PC-3 (cell line): ENCODE measurements at regions of chr4 and their contacts with region 1.

Region 1: DNA sequence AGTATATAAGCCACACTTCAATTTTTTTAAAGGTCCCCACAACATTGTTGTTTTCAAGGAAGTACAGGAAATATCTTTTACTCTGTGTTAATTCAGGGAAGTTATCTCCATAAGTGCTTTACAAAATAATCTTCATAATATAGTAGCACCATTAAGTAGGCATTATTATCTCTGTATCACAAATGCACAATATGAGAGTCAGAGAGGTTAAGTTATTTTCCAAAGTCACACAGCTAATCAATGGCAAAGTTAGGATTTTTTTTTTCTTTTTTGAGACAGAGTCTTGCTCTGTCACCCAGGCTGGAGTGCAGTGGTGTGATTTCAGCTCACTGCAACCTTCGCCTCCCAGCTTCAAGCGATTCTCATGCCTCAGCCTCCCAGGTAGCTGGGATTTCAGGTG is 35.1 kb upstream of the PI4K2B start:
- DNase-seq: no peak
- ATAC-seq: no peak
- H3K4me3 ChIP-seq: no peak overlapping the region
- H3K27ac ChIP-seq: no peak overlapping the region
- H3K4me1 ChIP-seq: no peaks in the 10 kb centered on the region
- H3K27me3 ChIP-seq: no peaks in the 10 kb centered on the region
- CTCF ChIP-seq: no peak

Region 2: GRCh38 chr4:24794916-24795665 is 403.6 kb before region 1 on chr4 and contains the start of gene SOD3:
- CTCF ChIA-PET with region 1: no interaction called
- POLR2A ChIA-PET with region 1: no interaction called
- intact Hi-C with region 1: no loop called
- DNase-seq: peak; percentile 86
- ATAC-seq: peak; percentile 96
- H3K4me3 ChIP-seq: peak within 1 kb of the TSS; percentile 63
- H3K27ac ChIP-seq: peak within 1 kb of the TSS; percentile 63
- H3K4me1 ChIP-seq: peaks cover 24% of the 10 kb centered on the region
- H3K27me3 ChIP-seq: no peaks in the 10 kb centered on the region
- CTCF ChIP-seq: no peak
- total RNA-seq, gene SOD3: 10.7 and 16.4 TPM in 2 replicates

Region 3: GRCh38 chr4:25020236-25020635 is 178.5 kb before region 1 on chr4:
- CTCF ChIA-PET with region 1: no interaction called
- POLR2A ChIA-PET with region 1: no interaction called
- intact Hi-C with region 1: no loop called
- DNase-seq: peak; percentile 38
- ATAC-seq: 0 out of 2 replicates have a peak, but pooled peaks have one; percentile 37
- H3K4me3 ChIP-seq: no peak overlapping the region
- H3K27ac ChIP-seq: no peak overlapping the region
- H3K4me1 ChIP-seq: no peaks in the 10 kb centered on the region
- H3K27me3 ChIP-seq: no peaks in the 10 kb centered on the region
- CTCF ChIP-seq: no peak

Region 4: GRCh38 chr4:25271866-25272265 is 73.2 kb after region 1 on chr4:
- CTCF ChIA-PET with region 1: interaction called, 12 read pairs
- POLR2A ChIA-PET with region 1: interaction called, 5 read pairs
- intact Hi-C with region 1: no loop called
- DNase-seq: no peak
- ATAC-seq: no peak
- H3K4me3 ChIP-seq: no peak overlapping the region
- H3K27ac ChIP-seq: no peak overlapping the region
- H3K4me1 ChIP-seq: no peaks in the 10 kb centered on the region
- H3K27me3 ChIP-seq: no peaks in the 10 kb centered on the region
- CTCF ChIP-seq: no peak